Right lobe of liver (tissue), 6 donors: ENCODE measurements at regions of chr10 and their contacts with region 1.

Region 1: DNA sequence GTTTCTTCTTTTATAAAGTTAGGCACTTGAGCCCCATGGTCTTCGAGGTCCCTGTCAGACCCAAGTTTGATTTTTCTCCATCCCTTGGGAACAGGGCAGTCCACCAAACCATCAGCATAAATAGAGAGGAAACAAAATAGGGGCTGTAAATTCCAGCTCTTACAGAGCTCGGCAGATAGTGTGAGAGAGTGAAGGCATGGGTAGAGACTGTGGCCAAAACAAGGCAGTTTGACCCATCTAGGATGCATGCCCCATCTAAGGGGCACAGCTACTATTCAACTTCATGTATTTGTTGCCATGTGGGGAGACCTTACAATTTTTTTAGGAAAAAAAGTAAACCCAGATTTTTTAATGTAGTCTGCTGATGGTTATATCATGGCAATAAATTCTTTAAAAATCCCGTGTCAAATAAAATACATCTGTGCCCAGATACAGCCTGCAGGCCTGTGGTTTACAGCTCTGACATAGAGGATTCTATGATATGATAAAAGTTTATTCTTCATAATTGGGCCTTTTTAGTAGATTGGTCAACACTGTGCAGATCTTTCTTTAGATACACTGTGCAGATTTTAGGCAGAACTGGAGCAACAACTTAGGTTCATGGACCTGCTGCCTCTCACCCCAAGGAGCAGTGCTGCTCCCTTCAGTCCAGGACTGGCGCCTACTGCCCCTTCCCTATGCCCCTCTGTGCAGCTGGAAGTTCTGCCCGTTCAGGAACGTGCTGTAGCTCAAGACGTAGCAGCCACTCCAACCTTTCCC is 5.3 kb downstream of the PPP1R3C start:
- DNase-seq: peak in 1 of 3 donors; percentile 62
- ATAC-seq: peak; percentile 27 to 46 (median 37)
- H3K4me3 ChIP-seq: no peak overlapping the region
- H3K27ac ChIP-seq: peak overlapping the region in 2 of 3 donors; percentile 19 to 46
- H3K4me1 ChIP-seq: peaks cover 0 to 31% (median 0%) of the 10 kb centered on the region in 4 donors
- H3K27me3 ChIP-seq: no peaks in the 10 kb centered on the region
- CTCF ChIP-seq: peak in 1 of 4 donors; percentile 27
- POLR2A ChIP-seq: no peak

Region 2: DNA sequence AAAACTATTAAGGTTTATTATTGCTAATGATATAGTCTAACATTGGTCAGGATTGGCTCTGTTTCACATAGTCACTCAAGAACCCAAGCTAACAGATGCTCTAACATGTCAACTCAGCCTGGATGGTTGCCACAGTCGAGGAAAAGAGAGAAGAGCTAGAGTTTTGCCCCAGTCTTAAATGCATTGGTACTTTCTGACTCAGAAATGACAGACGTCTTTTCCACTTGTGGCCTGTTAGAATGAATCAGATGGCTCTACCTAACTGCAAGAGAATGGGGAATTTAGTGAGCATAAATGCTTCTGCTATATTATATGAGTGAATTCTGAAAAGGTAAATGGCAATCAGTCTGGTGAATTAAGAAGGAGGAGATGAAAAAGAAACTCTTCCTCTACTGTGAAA is 203.5 kb before region 1 on chr10:
- intact Hi-C with region 1: no loop called
- DNase-seq: no peak
- ATAC-seq: no peak
- H3K4me3 ChIP-seq: no peak overlapping the region
- H3K27ac ChIP-seq: no peak overlapping the region
- H3K4me1 ChIP-seq: no peaks in the 10 kb centered on the region
- H3K27me3 ChIP-seq: no peaks in the 10 kb centered on the region
- CTCF ChIP-seq: no peak
- POLR2A ChIP-seq: no peak

Region 3: DNA sequence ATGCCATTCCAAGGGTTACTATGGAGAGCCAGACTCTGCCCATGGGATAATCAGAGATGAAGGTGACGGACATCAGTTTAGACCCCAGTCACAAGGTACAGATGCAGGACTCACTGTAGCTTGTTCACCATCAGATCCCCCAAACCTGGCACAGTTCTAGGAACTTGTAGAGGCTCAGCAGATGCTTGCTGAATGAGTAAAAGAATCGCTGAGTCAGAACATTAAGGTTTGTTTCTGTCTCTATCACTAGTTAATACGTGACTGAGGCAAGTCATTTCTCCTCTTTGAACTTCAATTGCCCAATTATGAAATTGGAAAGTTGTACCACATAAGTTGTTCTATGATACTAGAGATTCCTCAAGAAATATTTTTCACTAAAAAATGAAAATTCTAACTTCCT is 59.7 kb before region 1 on chr10:
- intact Hi-C with region 1: loop called in 1 of 2 experiments (anchors 10 kb)
- DNase-seq: no peak
- ATAC-seq: peak in 1 of 4 donors; percentile 38
- H3K4me3 ChIP-seq: no peak overlapping the region
- H3K27ac ChIP-seq: no peak overlapping the region
- H3K4me1 ChIP-seq: no peaks in the 10 kb centered on the region
- H3K27me3 ChIP-seq: no peaks in the 10 kb centered on the region
- CTCF ChIP-seq: no peak
- POLR2A ChIP-seq: no peak

Region 4: DNA sequence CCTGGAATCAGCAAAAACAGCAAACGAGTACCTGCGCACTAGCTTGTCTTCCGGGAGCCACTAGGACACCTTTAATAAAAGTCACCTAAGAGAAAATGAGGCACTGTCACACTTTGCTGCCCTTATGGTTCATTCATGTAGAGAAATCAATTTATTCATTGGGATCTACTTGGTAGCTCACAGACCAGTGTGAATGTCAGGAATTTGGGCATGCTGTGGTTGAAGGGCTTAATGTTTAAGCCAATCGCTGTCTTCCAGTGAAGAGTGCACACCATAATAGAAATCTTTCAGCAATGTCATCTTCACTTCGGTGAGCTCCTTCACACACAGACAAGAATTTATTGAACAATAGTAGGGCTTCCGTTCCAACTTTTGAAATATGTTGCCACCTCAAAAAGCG is 728.5 kb after region 1 on chr10:
- intact Hi-C with region 1: no loop called
- DNase-seq: no peak
- ATAC-seq: no peak
- H3K4me3 ChIP-seq: no peak overlapping the region
- H3K27ac ChIP-seq: no peak overlapping the region
- H3K4me1 ChIP-seq: no peaks in the 10 kb centered on the region
- H3K27me3 ChIP-seq: no peaks in the 10 kb centered on the region
- CTCF ChIP-seq: no peak
- POLR2A ChIP-seq: no peak